Panc1 (cell line): ENCODE measurements at regions of chr5 and their contacts with region 1.

Region 1: DNA sequence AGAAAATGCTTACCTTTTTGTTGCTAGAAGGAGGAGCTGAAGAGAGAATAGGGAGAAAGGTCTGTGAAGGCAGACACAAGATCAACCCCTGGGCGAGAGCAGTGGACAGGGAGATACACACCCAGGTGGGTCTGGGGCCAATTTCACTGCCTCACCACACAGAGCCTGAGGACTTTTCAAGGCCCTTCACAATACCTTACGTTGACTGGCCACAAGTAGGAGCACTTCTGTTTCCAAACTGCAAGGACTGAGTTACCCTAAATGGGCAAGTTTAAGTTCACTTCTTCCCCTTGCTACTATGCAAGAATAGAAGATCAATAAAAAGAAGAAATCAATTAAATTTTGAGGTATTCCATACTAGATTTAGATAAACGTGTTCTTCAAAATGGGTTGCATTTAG is 174.5 kb upstream of the SLC12A2 start:
- DNase-seq: peak; percentile 42
- ATAC-seq: peak; percentile 86
- H3K4me3 ChIP-seq: no peak overlapping the region
- H3K27ac ChIP-seq: no peak overlapping the region
- H3K4me1 ChIP-seq: no peaks in the 10 kb centered on the region
- H3K27me3 ChIP-seq: no peaks in the 10 kb centered on the region
- CTCF ChIP-seq: peak; percentile 72

Region 2: DNA sequence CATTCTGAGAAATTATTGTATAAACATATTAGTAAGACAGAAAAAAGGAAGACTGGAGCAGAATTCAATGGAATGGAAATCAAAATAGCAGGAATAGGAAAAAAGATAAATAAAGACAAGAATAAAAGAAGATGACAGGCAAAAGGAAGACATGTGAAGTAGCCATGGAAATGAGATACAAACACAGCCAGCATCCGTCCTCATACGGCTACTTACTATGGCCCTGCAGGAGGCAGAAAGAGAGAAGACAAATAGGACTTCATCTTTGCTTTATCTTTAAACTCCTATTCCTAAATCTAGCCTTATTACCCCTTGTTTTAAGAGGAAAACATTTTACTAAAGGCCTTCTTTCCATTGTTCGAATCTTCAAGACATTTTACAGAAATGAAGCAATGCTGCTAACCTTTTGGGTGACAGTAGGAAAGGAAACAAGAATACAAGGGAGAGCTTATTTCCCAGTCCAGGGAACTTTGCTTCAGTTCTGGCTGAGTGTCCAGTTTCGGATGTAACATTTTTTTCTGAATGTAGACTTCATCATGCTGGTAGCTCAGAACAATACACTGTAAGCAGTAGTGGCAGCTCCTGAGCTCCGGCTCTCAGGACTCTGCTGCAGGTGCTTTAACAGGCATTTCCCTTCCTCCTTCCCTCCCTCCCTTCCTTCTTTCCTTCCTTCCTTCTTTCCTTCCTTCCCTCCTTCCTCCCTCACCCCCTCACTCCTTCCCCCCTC is 68.1 kb after region 1 on chr5:
- CTCF ChIA-PET with region 1: no interaction called
- POLR2A ChIA-PET with region 1: no interaction called
- in situ Hi-C with region 1: no loop called
- intact Hi-C with region 1: no loop called
- DNase-seq: no peak
- ATAC-seq: no peak
- H3K4me3 ChIP-seq: no peak overlapping the region
- H3K27ac ChIP-seq: no peak overlapping the region
- H3K4me1 ChIP-seq: no peaks in the 10 kb centered on the region
- H3K27me3 ChIP-seq: no peaks in the 10 kb centered on the region
- CTCF ChIP-seq: no peak

Region 3: GRCh38 chr5:128062172-128062746 is 153.2 kb after region 1 on chr5:
- CTCF ChIA-PET with region 1: no interaction called
- POLR2A ChIA-PET with region 1: no interaction called
- in situ Hi-C with region 1: no loop called
- intact Hi-C with region 1: no loop called
- DNase-seq: no peak
- ATAC-seq: no peak
- H3K4me3 ChIP-seq: no peak overlapping the region
- H3K27ac ChIP-seq: no peak overlapping the region
- H3K4me1 ChIP-seq: no peaks in the 10 kb centered on the region
- H3K27me3 ChIP-seq: no peaks in the 10 kb centered on the region
- CTCF ChIP-seq: no peak

Region 4: DNA sequence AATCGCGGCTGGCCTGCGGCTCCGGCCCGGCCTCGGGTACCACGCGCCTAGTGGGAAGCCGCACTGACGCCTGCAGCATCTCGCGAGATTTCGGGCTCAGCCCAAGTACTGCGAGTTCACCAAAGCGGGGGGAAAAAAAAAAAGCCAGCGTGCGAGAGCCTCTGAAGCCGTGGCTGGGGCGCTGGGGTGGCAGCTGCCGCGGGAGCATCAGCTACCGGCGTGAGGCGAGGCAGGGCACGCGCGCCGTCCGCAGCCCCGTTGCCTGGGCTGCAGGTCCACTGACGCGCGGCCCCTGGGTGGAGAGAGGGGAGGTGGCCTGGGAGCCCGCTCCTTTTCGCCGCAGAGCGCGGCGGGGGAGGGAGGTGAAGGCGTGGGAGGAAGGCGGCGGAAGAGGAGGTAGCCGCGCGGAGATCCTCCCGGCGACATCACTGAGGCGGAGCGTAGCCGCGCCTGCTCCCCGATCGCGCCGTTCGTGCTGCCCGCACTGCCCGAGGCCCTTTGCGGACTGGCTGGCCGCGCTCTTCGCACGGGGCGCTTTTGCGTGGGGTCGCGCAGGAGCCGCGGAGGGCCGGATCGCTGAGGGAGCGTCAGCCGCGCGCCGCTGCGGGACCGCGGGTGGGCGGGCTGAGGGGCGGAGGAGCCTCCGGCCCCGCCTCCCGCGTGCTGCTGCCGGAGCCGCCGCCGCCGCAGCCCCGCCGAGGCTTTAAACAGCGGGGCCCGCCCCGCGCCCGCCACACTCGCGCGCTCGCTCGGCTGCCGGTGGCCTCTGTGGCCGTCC is 174.1 kb after region 1 on chr5 and contains the start of gene SLC12A2:
- CTCF ChIA-PET with region 1: no interaction called
- POLR2A ChIA-PET with region 1: no interaction called
- in situ Hi-C with region 1: no loop called
- intact Hi-C with region 1: loop called (anchors 10 kb)
- DNase-seq: peak; percentile 61
- ATAC-seq: peak; percentile 90
- H3K4me3 ChIP-seq: peak within 1 kb of the TSS; percentile 64 to 83
- H3K27ac ChIP-seq: peak within 1 kb of the TSS; percentile 94
- H3K4me1 ChIP-seq: peaks cover 35% of the 10 kb centered on the region
- H3K27me3 ChIP-seq: no peaks in the 10 kb centered on the region
- CTCF ChIP-seq: no peak
- total RNA-seq, gene SLC12A2: 36.9 TPM